Calu3 (cell line): ENCODE measurements at regions of chr2 and their contacts with region 1.

Region 1: DNA sequence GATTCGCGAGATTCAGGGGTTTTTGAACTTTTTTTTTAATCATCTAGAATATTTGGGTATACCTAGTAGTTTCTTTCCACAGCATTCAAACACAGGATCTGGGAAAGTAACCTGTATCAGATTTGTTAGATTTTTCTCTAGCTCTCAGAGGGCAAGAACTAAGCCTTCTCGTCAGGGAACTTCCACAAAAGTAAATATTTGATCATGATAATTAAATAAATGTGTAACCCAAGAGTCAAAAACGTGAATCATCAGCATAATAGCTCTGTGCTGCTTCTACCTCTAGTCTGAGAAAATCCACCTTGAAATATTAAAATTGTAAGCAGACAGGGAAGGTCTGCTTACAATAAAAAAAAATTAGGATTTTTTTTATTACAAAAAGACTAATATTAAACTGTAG is 225.7 kb upstream of the SPOPL start:
- DNase-seq: no peak
- H3K4me3 Mint-ChIP-seq: peak overlapping the region; percentile 33
- H3K27ac Mint-ChIP-seq: peak overlapping the region; percentile 63
- H3K4me1 Mint-ChIP-seq: peaks cover 41% of the 10 kb centered on the region
- H3K27me3 Mint-ChIP-seq: no peaks in the 10 kb centered on the region
- CTCF ChIP-seq: no peak

Region 2: GRCh38 chr2:138078153-138078552 is 197.7 kb before region 1 on chr2:
- CTCF ChIA-PET with region 1: no interaction called
- intact Hi-C with region 1: no loop called
- DNase-seq: no peak
- H3K4me3 Mint-ChIP-seq: no peak overlapping the region
- H3K27ac Mint-ChIP-seq: no peak overlapping the region
- H3K4me1 Mint-ChIP-seq: no peaks in the 10 kb centered on the region
- H3K27me3 Mint-ChIP-seq: no peaks in the 10 kb centered on the region
- CTCF ChIP-seq: no peak

Region 3: DNA sequence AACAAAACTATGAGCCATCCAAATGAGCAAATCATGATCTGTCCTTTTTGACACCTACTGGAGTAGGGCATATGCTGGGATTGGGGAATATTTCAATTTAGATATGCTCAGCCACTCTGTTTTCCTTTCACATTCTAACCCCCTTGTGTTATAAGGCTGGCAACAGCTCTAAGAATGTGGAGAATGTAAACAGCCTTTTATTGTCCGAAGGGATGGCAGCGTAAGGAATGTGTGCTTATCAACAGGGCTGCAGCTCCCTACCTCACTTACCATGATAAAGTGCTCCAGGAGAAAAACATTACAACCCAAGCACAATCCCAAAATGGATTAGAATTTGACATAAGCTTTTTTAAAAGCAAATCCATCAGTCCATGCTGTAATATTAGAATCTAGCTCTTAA is 502.1 kb after region 1 on chr2:
- CTCF ChIA-PET with region 1: no interaction called
- intact Hi-C with region 1: loop called (anchors 5 kb)
- DNase-seq: no peak
- H3K4me3 Mint-ChIP-seq: no peak overlapping the region
- H3K27ac Mint-ChIP-seq: no peak overlapping the region
- H3K4me1 Mint-ChIP-seq: peaks cover 20% of the 10 kb centered on the region
- H3K27me3 Mint-ChIP-seq: peaks cover 33% of the 10 kb centered on the region
- CTCF ChIP-seq: no peak